BJ (cell line): ENCODE measurements at regions of chr16 and their contacts with region 1.

Region 1: DNA sequence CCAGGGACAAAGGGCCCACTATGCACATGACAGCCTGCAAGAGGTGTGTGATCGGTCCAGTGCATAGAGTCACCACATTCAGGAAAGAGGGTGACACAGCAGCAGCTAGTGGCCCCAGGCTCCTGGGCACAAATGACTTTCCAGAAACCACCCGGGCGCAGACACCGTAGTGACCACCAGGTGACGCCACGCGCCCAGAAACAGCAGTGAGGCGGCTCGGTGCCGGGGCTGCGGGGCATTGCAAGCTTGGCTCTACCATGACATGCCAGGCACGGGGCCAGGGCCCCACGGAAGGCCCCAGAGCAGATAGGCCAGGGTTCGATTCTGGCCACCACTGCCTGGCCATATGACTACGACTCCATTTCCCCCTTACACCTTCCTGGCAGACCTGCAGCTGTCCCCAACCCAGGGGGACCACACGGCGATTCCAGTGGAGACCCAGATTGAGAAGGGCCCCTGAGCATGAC is 6.7 kb downstream of the RHBDF1 start:
- DNase-seq: no peak
- H3K4me3 ChIP-seq: no peak overlapping the region
- H3K27me3 ChIP-seq: no peaks in the 10 kb centered on the region
- CTCF ChIP-seq: peak; percentile 97

Region 2: DNA sequence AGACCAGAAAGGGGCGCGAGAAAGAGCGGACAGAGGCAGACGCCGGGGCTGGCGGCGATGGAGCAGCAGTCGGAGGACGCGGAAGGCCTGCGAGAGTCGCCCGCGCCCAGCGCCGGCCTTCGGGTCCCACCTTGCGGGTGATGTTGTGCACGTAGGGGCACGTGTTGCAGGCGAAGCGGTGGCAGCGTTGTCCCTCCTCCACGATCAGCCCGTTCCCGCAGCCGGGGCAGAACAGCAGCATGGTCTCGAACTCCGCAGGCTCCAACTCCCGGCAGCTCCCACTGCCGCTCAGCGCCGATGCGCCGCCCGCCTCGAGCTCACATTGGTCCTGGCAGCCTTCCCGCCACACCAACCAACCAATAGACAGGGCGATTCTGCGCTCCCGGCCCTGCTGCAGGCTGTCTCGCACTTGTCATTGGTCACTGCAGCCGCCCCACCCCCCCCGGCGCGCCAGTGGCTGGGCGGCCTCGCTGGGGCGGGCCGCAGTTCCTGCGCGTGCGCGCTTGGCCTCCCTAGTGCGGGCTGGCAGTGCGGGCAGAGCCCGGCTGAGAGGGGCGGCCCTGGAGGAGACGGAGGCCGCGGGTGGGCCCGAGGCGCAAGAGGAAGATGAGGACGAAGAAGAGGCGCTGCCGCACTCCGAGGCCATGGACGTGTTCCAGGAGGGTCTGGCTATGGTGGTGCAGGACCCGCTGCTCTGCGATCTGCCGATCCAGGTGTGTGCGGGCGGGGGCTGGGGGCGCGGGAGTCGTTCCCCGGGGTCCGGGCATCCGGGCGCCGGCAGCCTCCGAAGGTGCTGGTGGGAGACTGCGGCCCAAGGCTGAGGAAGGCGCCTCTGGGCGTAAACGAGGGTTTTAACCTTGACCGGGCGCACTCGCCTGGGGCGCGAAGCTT is 12.1 kb before region 1 on chr16 and contains the starts of genes POLR3K and SNRNP25:
- CTCF ChIA-PET with region 1: interaction called, 25 read pairs
- POLR2A ChIA-PET with region 1: no interaction called
- DNase-seq: peak; percentile 84
- H3K4me3 ChIP-seq: peak within 1 kb of the TSS; percentile 68
- H3K27me3 ChIP-seq: no peaks in the 10 kb centered on the region
- CTCF ChIP-seq: no peak
- polyA plus RNA-seq, gene POLR3K: 14.3 and 14.6 TPM in 2 replicates
- polyA plus RNA-seq, gene SNRNP25: 23.6 and 34.6 TPM in 2 replicates

Region 3: DNA sequence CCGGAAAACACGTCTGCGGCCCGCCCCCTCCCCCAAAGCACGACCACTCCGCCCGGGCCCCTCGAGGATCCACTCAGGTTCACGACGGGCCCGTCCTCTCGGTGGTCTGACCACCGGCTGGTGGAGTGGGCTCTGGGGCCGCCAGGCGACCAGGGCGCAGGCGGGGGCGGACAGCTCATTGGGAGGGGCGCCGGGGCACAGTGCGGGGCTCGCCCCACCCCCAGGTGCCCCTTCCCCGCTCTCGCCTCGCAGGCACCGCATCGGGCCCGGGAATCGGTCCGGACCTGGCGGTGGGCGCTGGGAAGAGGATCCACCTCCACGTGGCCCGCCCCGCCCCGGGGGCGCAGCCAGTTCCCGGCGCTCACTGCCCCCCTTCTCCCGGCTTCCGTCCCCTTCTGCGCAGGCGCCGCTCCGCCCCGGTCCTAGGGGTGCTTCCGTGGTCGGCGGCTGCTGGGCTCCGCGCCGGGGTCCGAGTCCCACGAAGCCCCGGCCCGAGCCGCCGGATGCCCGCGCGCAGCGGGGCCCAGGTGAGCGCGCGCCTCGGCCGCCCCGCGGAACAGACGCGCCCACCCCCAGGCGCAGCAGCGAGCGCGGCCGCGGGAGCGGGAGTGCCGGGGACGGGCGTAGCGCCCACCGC is 12.2 kb after region 1 on chr16 and contains the start of gene MPG:
- CTCF ChIA-PET with region 1: interaction called, 57 read pairs
- POLR2A ChIA-PET with region 1: no interaction called
- DNase-seq: no peak
- H3K4me3 ChIP-seq: peak within 1 kb of the TSS; percentile 74
- H3K27me3 ChIP-seq: no peaks in the 10 kb centered on the region
- CTCF ChIP-seq: no peak
- polyA plus RNA-seq, gene MPG: 73.3 and 117 TPM in 2 replicates

Region 4: GRCh38 chr16:180938-181667 is 115.4 kb after region 1 on chr16:
- CTCF ChIA-PET with region 1: interaction called, 18 read pairs
- POLR2A ChIA-PET with region 1: no interaction called
- DNase-seq: no peak
- H3K4me3 ChIP-seq: peak overlapping the region; percentile 29; the same call in 1 of the 2 replicates
- H3K27me3 ChIP-seq: peaks cover 10% of the 10 kb centered on the region
- CTCF ChIP-seq: peak; percentile 89